ENCODE measurements at regions of chr2 and their contacts with region 1.

Region 1: GRCh38 chr2:173134703-173135102 is 59.1 kb downstream of the MAP3K20 start:
- DNase-seq: peak; percentile 64
- H3K4me3 Mint-ChIP-seq: peak overlapping the region; percentile 28
- H3K27ac Mint-ChIP-seq: peak overlapping the region; percentile 30
- H3K4me1 Mint-ChIP-seq: peaks cover 59% of the 10 kb centered on the region
- H3K27me3 Mint-ChIP-seq: peaks cover 15% of the 10 kb centered on the region

Region 2: GRCh38 chr2:172931918-172932520 is 202.7 kb before region 1 on chr2:
- intact Hi-C with region 1: no loop called
- DNase-seq: peak; percentile 86
- H3K4me3 Mint-ChIP-seq: no peak overlapping the region
- H3K27ac Mint-ChIP-seq: no peak overlapping the region
- H3K4me1 Mint-ChIP-seq: peaks cover 5% of the 10 kb centered on the region
- H3K27me3 Mint-ChIP-seq: peaks cover 10% of the 10 kb centered on the region

Region 3: GRCh38 chr2:173075781-173076580 is 58.7 kb before region 1 on chr2 and contains the start of gene MAP3K20:
- intact Hi-C with region 1: loop called (anchors 2 kb)
- DNase-seq: peak; percentile 90
- H3K4me3 Mint-ChIP-seq: peak within 1 kb of the TSS; percentile 83
- H3K27ac Mint-ChIP-seq: peak within 1 kb of the TSS; percentile 79
- H3K4me1 Mint-ChIP-seq: peaks cover 22% of the 10 kb centered on the region
- H3K27me3 Mint-ChIP-seq: peaks cover 30% of the 10 kb centered on the region
- total RNA-seq, gene MAP3K20: 17.9 and 19.1 TPM in 2 replicates

Region 4: DNA sequence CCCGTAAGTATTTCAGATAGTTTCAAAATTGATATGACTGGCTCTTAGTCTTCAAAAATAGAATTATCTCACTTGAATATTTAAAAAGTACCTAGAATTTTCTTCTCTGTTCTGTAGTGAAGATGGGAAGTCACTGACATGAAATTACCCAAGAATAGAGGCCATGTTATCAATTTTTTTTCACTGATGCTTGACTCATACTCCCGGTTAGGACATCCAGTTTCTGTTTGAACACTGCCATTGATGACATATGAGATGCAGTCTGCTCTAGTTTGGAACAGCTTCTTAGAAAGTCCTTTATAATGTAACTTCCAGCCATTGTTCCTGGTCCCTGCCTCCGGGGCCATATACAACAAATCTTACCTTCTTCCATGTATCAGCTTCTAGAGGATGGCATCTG is 33.0 kb before region 1 on chr2:
- intact Hi-C with region 1: loop called (anchors 1 kb)
- DNase-seq: no peak
- H3K4me3 Mint-ChIP-seq: no peak overlapping the region
- H3K27ac Mint-ChIP-seq: peak overlapping the region; percentile 55
- H3K4me1 Mint-ChIP-seq: peaks cover 19% of the 10 kb centered on the region
- H3K27me3 Mint-ChIP-seq: no peaks in the 10 kb centered on the region

Region 5: DNA sequence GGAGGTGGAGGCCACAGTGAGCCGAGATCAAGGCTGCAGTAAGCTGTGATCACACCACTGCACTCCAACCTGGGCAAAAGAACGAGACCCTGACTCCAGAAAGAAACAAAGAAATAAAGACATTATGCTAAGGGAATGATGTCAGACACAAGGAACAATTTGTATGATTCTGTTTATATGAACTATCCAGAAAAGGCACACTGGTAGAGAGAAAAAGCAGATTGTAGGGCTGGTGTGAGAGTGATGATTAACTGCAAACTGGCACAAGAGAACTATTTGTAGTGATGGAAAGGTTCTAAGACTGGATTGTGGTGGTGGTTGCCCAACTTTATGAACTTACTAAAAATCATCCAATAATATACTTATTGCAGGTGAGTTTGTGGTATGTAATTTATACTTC is 47.3 kb after region 1 on chr2:
- intact Hi-C with region 1: loop called (anchors 2 kb)
- DNase-seq: no peak
- H3K4me3 Mint-ChIP-seq: no peak overlapping the region
- H3K27ac Mint-ChIP-seq: peak overlapping the region; percentile 15
- H3K4me1 Mint-ChIP-seq: no peaks in the 10 kb centered on the region
- H3K27me3 Mint-ChIP-seq: peaks cover 7% of the 10 kb centered on the region

Measured in activated CD4-positive, alpha-beta T cell treated with anti-CD3 and anti-CD28 coated beads, Interleukin-2, amount 10 ng/mL, durations not matched to agents 24 days and 14 days (primary cell).